CD4-positive, alpha-beta T cell (primary cell): ENCODE measurements at regions of chr7 and their contacts with region 1.

Region 1: GRCh38 chr7:124667312-124668153 is 98.1 kb downstream of the GPR37 start:
- DNase-seq: no peak
- ATAC-seq: no peak
- H3K4me3 ChIP-seq: no peak overlapping the region
- H3K4me3 Mint-ChIP-seq: no peak overlapping the region
- H3K27ac ChIP-seq: no peak overlapping the region
- H3K27ac Mint-ChIP-seq: no peak overlapping the region
- H3K4me1 ChIP-seq: no peaks in the 10 kb centered on the region
- H3K4me1 Mint-ChIP-seq: no peaks in the 10 kb centered on the region
- H3K27me3 ChIP-seq: no peaks in the 10 kb centered on the region
- H3K27me3 Mint-ChIP-seq: no peaks in the 10 kb centered on the region
- CTCF ChIP-seq: no peak

Region 2: DNA sequence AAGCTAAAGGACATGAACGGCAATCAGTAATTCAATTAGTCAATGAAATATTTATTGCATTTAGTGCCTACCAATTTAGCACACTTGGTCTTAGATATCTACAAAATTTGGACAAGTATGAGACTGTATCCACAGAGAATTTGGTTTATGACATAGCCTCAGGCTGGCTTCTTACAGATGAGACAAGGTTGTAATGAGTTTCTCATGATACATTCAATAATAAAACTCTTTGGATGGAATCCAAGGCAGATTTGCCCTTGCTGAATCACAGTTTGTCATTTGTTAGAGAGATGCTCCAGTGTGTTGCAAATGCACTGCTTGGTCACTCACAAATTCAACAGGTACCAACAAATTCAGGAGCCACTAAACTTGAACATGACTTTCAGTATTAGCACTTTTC is 64.5 kb before region 1 on chr7:
- CTCF ChIA-PET with region 1: no interaction called
- POLR2A ChIA-PET with region 1: no interaction called
- intact Hi-C with region 1: loop called in 1 of 2 experiments (anchors 10 kb)
- DNase-seq: no peak
- ATAC-seq: no peak
- H3K4me3 ChIP-seq: no peak overlapping the region
- H3K4me3 Mint-ChIP-seq: no peak overlapping the region
- H3K27ac ChIP-seq: no peak overlapping the region
- H3K27ac Mint-ChIP-seq: no peak overlapping the region
- H3K4me1 ChIP-seq: no peaks in the 10 kb centered on the region
- H3K4me1 Mint-ChIP-seq: no peaks in the 10 kb centered on the region
- H3K27me3 ChIP-seq: no peaks in the 10 kb centered on the region
- H3K27me3 Mint-ChIP-seq: no peaks in the 10 kb centered on the region
- CTCF ChIP-seq: no peak